B cell (primary cell): ENCODE measurements at regions of chr1 and their contacts with region 1.

Region 1: GRCh38 chr1:155978325-155978972 is at the start of gene ARHGEF2:
- DNase-seq: peak; percentile 89
- ATAC-seq: peak; percentile 76
- H3K4me3 ChIP-seq: peak within 1 kb of the TSS; percentile 76 to 93 (median 81)
- H3K4me3 Mint-ChIP-seq: peak within 1 kb of the TSS; percentile 95
- H3K27ac ChIP-seq: peak within 1 kb of the TSS; percentile 70 to 91
- H3K27ac Mint-ChIP-seq: peak within 1 kb of the TSS; percentile 94
- H3K4me1 ChIP-seq: peaks cover 63 to 73% of the 10 kb centered on the region in 2 donors
- H3K4me1 Mint-ChIP-seq: peaks cover 81% of the 10 kb centered on the region
- H3K27me3 ChIP-seq: no peaks in the 10 kb centered on the region
- H3K27me3 Mint-ChIP-seq: no peaks in the 10 kb centered on the region
- CTCF ChIP-seq: peak; percentile 6
- total RNA-seq, gene ARHGEF2: 245 and 247 TPM in 2 replicates

Region 2: GRCh38 chr1:155706091-155706619 is 272.3 kb before region 1 on chr1:
- CTCF ChIA-PET with region 1: no interaction called
- POLR2A ChIA-PET with region 1: no interaction called
- intact Hi-C with region 1: no loop called
- DNase-seq: no peak
- ATAC-seq: no peak
- H3K4me3 ChIP-seq: no peak overlapping the region
- H3K4me3 Mint-ChIP-seq: no peak overlapping the region
- H3K27ac ChIP-seq: no peak overlapping the region
- H3K27ac Mint-ChIP-seq: no peak overlapping the region
- H3K4me1 ChIP-seq: no peaks in the 10 kb centered on the region
- H3K4me1 Mint-ChIP-seq: peaks cover 8% of the 10 kb centered on the region
- H3K27me3 ChIP-seq: no peaks in the 10 kb centered on the region
- H3K27me3 Mint-ChIP-seq: no peaks in the 10 kb centered on the region
- CTCF ChIP-seq: no peak

Region 3: GRCh38 chr1:155744711-155745283 is 233.7 kb before region 1 on chr1:
- CTCF ChIA-PET with region 1: no interaction called
- POLR2A ChIA-PET with region 1: no interaction called
- intact Hi-C with region 1: loop called (anchors 5 kb)
- DNase-seq: no peak
- ATAC-seq: no peak
- H3K4me3 ChIP-seq: peak overlapping the region; percentile 64 to 91 (median 80)
- H3K4me3 Mint-ChIP-seq: peak overlapping the region; percentile 98
- H3K27ac ChIP-seq: peak overlapping the region; percentile 69 to 76
- H3K27ac Mint-ChIP-seq: peak overlapping the region; percentile 97
- H3K4me1 ChIP-seq: peaks cover 5 to 6% of the 10 kb centered on the region in 2 donors
- H3K4me1 Mint-ChIP-seq: peaks cover 5% of the 10 kb centered on the region
- H3K27me3 ChIP-seq: no peaks in the 10 kb centered on the region
- H3K27me3 Mint-ChIP-seq: no peaks in the 10 kb centered on the region
- CTCF ChIP-seq: no peak

Region 4: DNA sequence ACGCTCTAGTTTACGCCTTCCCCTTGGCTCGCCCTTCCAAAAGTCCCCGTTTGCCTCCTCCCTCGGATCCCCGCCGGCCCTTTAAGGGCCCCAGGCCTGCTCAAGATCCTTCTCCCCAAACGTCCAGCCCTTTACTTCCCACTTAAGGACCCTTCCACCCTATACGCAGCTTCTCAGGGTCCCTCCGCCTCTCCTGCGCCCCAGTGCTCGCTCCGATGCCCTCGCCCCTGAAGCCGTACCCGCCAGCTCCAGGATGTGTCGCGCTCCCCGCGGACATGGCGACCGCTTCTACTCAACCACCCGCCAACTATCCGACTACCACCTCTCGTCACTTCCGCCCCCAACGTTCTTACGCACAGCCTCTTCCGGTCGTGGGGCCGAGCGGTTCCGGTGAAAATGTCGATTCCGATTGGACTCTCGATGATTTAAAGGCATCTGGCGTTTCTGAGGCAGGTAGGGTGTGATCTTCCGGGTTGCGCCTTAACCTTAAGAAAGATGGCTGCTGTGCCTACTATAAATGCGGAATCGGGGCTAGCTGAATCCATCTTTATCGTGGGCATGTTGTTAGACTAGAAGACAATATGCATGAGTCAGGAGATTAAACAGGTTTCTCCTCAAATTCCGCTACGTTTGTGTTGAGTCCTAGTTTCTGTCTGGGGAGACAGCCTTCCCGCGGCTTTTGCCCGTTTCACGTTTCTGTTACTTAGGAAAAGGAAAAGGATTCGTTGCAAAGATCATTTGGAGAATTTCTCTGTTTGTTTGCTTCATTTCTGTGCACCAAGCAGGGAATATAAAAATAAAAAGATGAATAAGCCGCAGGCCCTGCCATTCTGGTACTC is 44.1 kb before region 1 on chr1 and contains the start of gene KHDC4:
- CTCF ChIA-PET with region 1: interaction called, 206 read pairs
- POLR2A ChIA-PET with region 1: interaction called, 27 read pairs
- intact Hi-C with region 1: no loop called
- DNase-seq: peak; percentile 98
- ATAC-seq: peak; percentile 93
- H3K4me3 ChIP-seq: peak within 1 kb of the TSS; percentile 79 to 97 (median 84)
- H3K4me3 Mint-ChIP-seq: no peak within 1 kb of the TSS
- H3K27ac ChIP-seq: peak within 1 kb of the TSS; percentile 86 to 89
- H3K27ac Mint-ChIP-seq: peak within 1 kb of the TSS; percentile 54
- H3K4me1 ChIP-seq: peaks cover 43 to 55% of the 10 kb centered on the region in 2 donors
- H3K4me1 Mint-ChIP-seq: peaks cover 37% of the 10 kb centered on the region
- H3K27me3 ChIP-seq: no peaks in the 10 kb centered on the region
- H3K27me3 Mint-ChIP-seq: no peaks in the 10 kb centered on the region
- CTCF ChIP-seq: peak; percentile 57
- total RNA-seq, gene KHDC4: 122 TPM in 2 replicates

Region 5: GRCh38 chr1:155940993-155941844 is 37.2 kb before region 1 on chr1 and contains the start of gene RXFP4:
- CTCF ChIA-PET with region 1: interaction called, 206 read pairs
- POLR2A ChIA-PET with region 1: interaction called, 61 read pairs
- intact Hi-C with region 1: loop called (anchors 1 kb)
- DNase-seq: no peak
- ATAC-seq: no peak
- H3K4me3 ChIP-seq: no peak within 1 kb of the TSS
- H3K4me3 Mint-ChIP-seq: peak within 1 kb of the TSS; percentile 65
- H3K27ac ChIP-seq: peak within 1 kb of the TSS; percentile 76 to 89
- H3K27ac Mint-ChIP-seq: peak within 1 kb of the TSS; percentile 92
- H3K4me1 ChIP-seq: peaks cover 78 to 81% of the 10 kb centered on the region in 2 donors
- H3K4me1 Mint-ChIP-seq: peaks cover 75% of the 10 kb centered on the region
- H3K27me3 ChIP-seq: no peaks in the 10 kb centered on the region
- H3K27me3 Mint-ChIP-seq: no peaks in the 10 kb centered on the region
- CTCF ChIP-seq: no peak
- total RNA-seq, gene RXFP4: 0.32 TPM in 1 of 2 replicates, not detected in the other

Region 6: GRCh38 chr1:155946633-155947219 is 31.7 kb before region 1 on chr1:
- CTCF ChIA-PET with region 1: interaction called, 206 read pairs
- POLR2A ChIA-PET with region 1: interaction called, 61 read pairs
- intact Hi-C with region 1: loop called (anchors 1 kb)
- DNase-seq: no peak
- ATAC-seq: peak; percentile 11
- H3K4me3 ChIP-seq: peak overlapping the region in 1 of 5 experiments; percentile 4
- H3K4me3 Mint-ChIP-seq: peak overlapping the region; percentile 9
- H3K27ac ChIP-seq: peak overlapping the region; percentile 76 to 89
- H3K27ac Mint-ChIP-seq: peak overlapping the region; percentile 92
- H3K4me1 ChIP-seq: peaks cover 55 to 60% of the 10 kb centered on the region in 2 donors
- H3K4me1 Mint-ChIP-seq: peaks cover 56% of the 10 kb centered on the region
- H3K27me3 ChIP-seq: no peaks in the 10 kb centered on the region
- H3K27me3 Mint-ChIP-seq: no peaks in the 10 kb centered on the region
- CTCF ChIP-seq: no peak

Region 7: GRCh38 chr1:155954645-155955044 is 23.8 kb before region 1 on chr1:
- CTCF ChIA-PET with region 1: interaction called, 41 read pairs
- POLR2A ChIA-PET with region 1: interaction called, 33 read pairs
- intact Hi-C with region 1: no loop called
- DNase-seq: no peak
- ATAC-seq: no peak
- H3K4me3 ChIP-seq: no peak overlapping the region
- H3K4me3 Mint-ChIP-seq: no peak overlapping the region
- H3K27ac ChIP-seq: peak overlapping the region in 1 of 2 donors; percentile 25
- H3K27ac Mint-ChIP-seq: peak overlapping the region; percentile 32
- H3K4me1 ChIP-seq: peaks cover 5 to 10% of the 10 kb centered on the region in 2 donors
- H3K4me1 Mint-ChIP-seq: peaks cover 13% of the 10 kb centered on the region
- H3K27me3 ChIP-seq: no peaks in the 10 kb centered on the region
- H3K27me3 Mint-ChIP-seq: no peaks in the 10 kb centered on the region
- CTCF ChIP-seq: no peak

Region 8: GRCh38 chr1:155961937-155962336 is 16.5 kb before region 1 on chr1:
- CTCF ChIA-PET with region 1: interaction called, 41 read pairs
- POLR2A ChIA-PET with region 1: interaction called, 33 read pairs
- intact Hi-C with region 1: loop called (anchors 1 kb)
- DNase-seq: no peak
- ATAC-seq: no peak
- H3K4me3 ChIP-seq: no peak overlapping the region
- H3K4me3 Mint-ChIP-seq: peak overlapping the region; percentile 59
- H3K27ac ChIP-seq: peak overlapping the region; percentile 28 to 69
- H3K27ac Mint-ChIP-seq: peak overlapping the region; percentile 82
- H3K4me1 ChIP-seq: peaks cover 41 to 68% of the 10 kb centered on the region in 2 donors
- H3K4me1 Mint-ChIP-seq: peaks cover 66% of the 10 kb centered on the region
- H3K27me3 ChIP-seq: no peaks in the 10 kb centered on the region
- H3K27me3 Mint-ChIP-seq: no peaks in the 10 kb centered on the region
- CTCF ChIP-seq: no peak